ENCODE measurements at regions of chr9 and their contacts with region 1.

Region 1: GRCh38 chr9:37342895-37343294 is 79.6 kb upstream of the GRHPR start:
- DNase-seq: no peak
- H3K4me3 ChIP-seq: no peak overlapping the region
- H3K27ac ChIP-seq: no peak overlapping the region
- H3K4me1 ChIP-seq: no peaks in the 10 kb centered on the region
- H3K27me3 ChIP-seq: no peaks in the 10 kb centered on the region
- CTCF ChIP-seq: no peak

Region 2: DNA sequence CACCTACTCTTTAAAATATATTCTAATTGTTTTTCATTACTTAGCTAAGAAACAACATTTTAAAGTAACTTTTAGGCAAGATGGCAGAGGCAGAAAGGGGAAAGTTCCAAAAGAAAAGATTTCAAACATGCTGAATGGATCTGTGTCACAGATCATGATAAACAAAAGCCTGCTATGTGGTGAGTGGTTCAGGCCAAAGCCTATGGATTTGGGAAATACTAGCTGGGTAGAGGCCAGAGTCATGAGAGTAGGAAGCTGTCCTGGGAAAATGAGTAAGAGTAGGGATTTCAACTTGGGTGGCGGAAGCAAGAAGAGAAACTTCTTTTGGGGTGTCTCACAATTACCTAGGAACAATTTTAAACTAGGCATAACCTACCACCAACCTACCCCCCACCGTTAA is 10.9 kb after region 1 on chr9:
- CTCF ChIA-PET with region 1: no interaction called
- POLR2A ChIA-PET with region 1: no interaction called
- intact Hi-C with region 1: loop called (anchors 2 kb)
- DNase-seq: no peak
- H3K4me3 ChIP-seq: no peak overlapping the region
- H3K27ac ChIP-seq: no peak overlapping the region
- H3K4me1 ChIP-seq: no peaks in the 10 kb centered on the region
- H3K27me3 ChIP-seq: no peaks in the 10 kb centered on the region
- CTCF ChIP-seq: no peak

Measured in PC-9 (cell line).